Right cardiac atrium (tissue), 5 donors: ENCODE measurements at regions of chr2 and their contacts with region 1.

Region 1: GRCh38 chr2:217650716-217651360 is 352.0 kb downstream of the TNS1 start:
- DNase-seq: no peak
- ATAC-seq: peak; percentile 70 to 73
- H3K4me3 ChIP-seq: no peak overlapping the region
- H3K27ac ChIP-seq: no peak overlapping the region
- H3K4me1 ChIP-seq: peaks cover 5% of the 10 kb centered on the region
- H3K27me3 ChIP-seq: no peaks in the 10 kb centered on the region

Region 2: DNA sequence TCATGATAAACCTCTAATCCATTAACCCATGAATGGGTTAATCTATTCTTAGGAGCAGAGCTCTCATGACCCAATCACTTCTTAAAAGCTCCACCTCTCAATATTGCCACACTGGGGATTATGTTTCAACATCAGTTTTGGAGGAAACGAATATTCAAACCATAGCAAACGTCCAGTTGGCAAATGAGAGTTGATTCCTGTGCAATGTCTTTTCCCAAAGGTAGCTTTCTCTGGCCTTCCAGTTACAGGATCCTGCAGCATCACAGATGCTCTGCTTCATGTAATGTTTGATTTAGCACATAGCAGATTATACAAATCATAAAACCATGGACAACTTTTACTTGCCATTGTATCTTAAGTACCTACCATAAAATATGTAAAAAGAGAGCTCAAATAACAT is 129.0 kb before region 1 on chr2:
- intact Hi-C with region 1: loop called in 1 of 4 experiments (anchors 10 kb)
- DNase-seq: no peak
- ATAC-seq: peak in 1 of 2 donors; percentile 18
- H3K4me3 ChIP-seq: no peak overlapping the region
- H3K27ac ChIP-seq: no peak overlapping the region
- H3K4me1 ChIP-seq: no peaks in the 10 kb centered on the region
- H3K27me3 ChIP-seq: no peaks in the 10 kb centered on the region

Region 3: GRCh38 chr2:217538719-217539118 is 112.1 kb before region 1 on chr2:
- intact Hi-C with region 1: loop called in 1 of 4 experiments (anchors 10 kb)
- DNase-seq: no peak
- ATAC-seq: no peak
- H3K4me3 ChIP-seq: no peak overlapping the region
- H3K27ac ChIP-seq: no peak overlapping the region
- H3K4me1 ChIP-seq: peaks cover 3% of the 10 kb centered on the region
- H3K27me3 ChIP-seq: no peaks in the 10 kb centered on the region

Region 4: DNA sequence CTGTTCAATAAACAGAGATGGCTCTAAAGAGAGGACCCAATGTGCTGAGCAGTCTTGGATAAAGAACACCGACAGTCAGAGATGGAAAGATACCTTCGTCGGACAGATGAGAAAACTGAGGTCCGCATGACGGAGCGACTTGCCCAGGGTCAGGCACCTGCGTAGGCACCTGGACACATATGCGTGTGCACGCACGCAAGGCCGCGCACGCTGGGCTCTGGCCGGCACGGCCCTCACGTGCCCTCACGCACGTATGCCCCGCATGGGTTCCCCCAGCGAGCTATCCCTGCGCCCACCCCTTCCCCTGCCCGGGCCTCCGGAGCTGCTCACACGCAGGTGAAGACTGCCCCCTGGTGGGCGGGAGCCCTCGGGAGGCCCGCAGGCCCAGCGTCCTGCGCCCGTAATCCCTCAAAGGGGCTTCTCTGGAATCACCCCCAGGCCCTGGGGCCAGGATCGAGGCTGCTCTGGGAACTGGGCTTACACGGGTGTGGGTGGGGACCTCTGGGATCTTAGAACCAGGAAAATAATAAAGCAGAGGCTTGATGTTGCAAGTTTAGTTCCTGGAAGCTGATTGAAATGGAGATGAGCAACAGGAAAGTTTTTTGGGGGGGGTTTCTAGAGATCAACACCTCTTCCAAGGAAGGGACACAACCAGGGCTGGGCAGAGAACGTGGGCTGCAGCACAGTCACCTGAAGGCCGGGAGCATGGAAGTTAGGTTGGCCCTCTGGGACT is 105.7 kb after region 1 on chr2:
- intact Hi-C with region 1: loop called in 2 of 4 experiments (anchors 10 kb)
- DNase-seq: peak; percentile 80 to 92 (median 92)
- ATAC-seq: peak; percentile 85 to 90
- H3K4me3 ChIP-seq: peak overlapping the region; percentile 16
- H3K27ac ChIP-seq: no peak overlapping the region
- H3K4me1 ChIP-seq: peaks cover 5% of the 10 kb centered on the region
- H3K27me3 ChIP-seq: no peaks in the 10 kb centered on the region

Region 5: DNA sequence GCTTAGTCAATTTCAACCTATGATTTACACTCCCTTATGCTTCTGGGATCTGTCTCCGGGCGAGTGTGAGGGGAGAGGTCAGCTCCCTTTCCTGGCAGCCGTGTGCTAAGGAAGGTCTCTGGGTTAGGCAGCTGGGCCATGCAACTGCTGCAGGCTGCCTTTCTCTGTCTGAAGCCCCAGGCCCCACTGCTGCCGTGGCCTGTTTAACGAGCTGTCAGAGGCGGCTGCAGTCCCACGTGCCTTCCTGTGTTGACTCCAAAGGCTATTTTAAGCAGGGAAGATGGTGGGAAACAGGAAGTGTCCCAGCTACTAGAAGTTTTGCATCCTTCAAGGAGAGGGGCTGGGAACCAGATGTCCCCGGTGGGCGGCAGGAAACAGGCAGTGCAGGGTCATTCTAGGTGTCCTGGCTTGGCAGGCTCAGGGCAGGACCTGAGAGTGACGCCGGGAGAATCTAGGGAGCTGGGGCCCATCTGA is 165.6 kb after region 1 on chr2:
- intact Hi-C with region 1: no loop called
- DNase-seq: peak in 2 of 3 donors; percentile 77 to 79
- ATAC-seq: peak; percentile 41 to 44
- H3K4me3 ChIP-seq: no peak overlapping the region
- H3K27ac ChIP-seq: peak overlapping the region; percentile 71
- H3K4me1 ChIP-seq: peaks cover 20% of the 10 kb centered on the region
- H3K27me3 ChIP-seq: no peaks in the 10 kb centered on the region

Region 6: DNA sequence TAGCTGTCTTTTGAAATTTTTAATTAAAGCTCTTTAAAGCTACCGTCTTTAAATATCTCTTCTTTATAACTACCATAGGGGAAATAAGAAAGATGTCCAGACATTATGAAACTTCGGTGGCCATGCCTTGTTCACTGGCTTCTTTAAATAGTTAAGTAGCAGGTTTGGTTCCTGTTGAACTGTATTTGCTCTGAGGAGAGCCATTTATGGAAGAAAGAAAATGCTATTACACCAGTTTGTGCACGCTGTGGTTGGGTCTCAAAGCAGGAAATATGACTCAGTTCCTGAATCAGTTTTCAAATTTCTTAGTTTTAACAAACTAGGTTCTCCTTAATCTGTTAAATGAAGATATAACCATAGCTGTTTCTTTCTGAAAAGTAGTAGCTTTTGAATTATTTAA is 578.4 kb after region 1 on chr2:
- intact Hi-C with region 1: no loop called
- DNase-seq: no peak
- ATAC-seq: peak; percentile 67 to 84
- H3K4me3 ChIP-seq: no peak overlapping the region
- H3K27ac ChIP-seq: no peak overlapping the region
- H3K4me1 ChIP-seq: peaks cover 8% of the 10 kb centered on the region
- H3K27me3 ChIP-seq: no peaks in the 10 kb centered on the region